Heart right ventricle (tissue), 16 donors: ENCODE measurements at regions of chr3 and their contacts with region 1.

Region 1: DNA sequence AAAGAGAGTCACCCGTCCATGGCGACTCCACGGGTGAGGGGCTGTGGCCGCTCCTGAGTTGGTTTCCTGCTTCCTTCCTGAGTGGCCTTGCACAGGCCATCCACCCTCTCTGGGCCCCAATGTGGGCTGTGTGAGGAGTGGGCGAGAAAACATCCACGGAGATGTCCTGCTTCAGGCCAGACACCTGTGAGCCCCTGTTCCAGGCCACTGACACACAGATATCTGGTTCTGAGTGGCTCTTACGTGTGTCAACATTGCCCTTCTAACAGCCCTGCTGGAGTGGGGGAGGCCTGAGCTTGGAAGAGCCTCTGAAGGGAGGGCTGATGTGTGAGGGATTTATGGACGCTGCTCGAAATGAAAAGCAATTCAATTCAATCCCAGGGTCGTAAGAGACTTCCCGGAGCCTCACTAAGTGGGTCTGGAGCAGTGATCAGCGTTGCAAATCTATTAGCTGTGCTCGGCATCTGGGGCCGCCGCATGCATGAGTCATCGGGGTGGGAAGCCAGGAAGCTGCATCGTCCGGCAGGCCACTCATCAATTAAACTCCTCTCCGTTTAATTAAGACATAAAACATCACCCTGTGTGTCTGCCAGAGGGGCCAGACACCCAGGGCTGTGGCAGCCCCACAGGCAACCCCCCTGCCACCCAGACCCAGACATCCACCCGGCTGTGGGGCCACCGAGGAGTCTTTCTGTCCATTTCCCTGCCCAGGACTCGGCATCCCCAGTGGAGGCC is 20.0 kb upstream of the PRR23E start:
- DNase-seq: no peak
- ATAC-seq: peak in 1 of 8 donors; percentile 28
- H3K4me3 ChIP-seq: no peak overlapping the region
- H3K27ac ChIP-seq: no peak overlapping the region
- H3K4me1 ChIP-seq: peaks cover 0 to 8% (median 5%) of the 10 kb centered on the region in 9 donors
- H3K27me3 ChIP-seq: peaks cover 0 to 23% (median 9%) of the 10 kb centered on the region in 7 donors
- CTCF ChIP-seq: no peak

Region 2: GRCh38 chr3:126758026-126758425 is 414.9 kb before region 1 on chr3:
- intact Hi-C with region 1: loop called in 8 of 10 experiments (anchors 2 to 10 kb)
- DNase-seq: no peak
- ATAC-seq: peak in 3 of 8 donors; percentile 51 to 72 (median 51)
- H3K4me3 ChIP-seq: no peak overlapping the region
- H3K27ac ChIP-seq: no peak overlapping the region
- H3K4me1 ChIP-seq: peaks cover 0 to 19% (median 2%) of the 10 kb centered on the region in 9 donors
- H3K27me3 ChIP-seq: no peaks in the 10 kb centered on the region
- CTCF ChIP-seq: no peak

Region 3: DNA sequence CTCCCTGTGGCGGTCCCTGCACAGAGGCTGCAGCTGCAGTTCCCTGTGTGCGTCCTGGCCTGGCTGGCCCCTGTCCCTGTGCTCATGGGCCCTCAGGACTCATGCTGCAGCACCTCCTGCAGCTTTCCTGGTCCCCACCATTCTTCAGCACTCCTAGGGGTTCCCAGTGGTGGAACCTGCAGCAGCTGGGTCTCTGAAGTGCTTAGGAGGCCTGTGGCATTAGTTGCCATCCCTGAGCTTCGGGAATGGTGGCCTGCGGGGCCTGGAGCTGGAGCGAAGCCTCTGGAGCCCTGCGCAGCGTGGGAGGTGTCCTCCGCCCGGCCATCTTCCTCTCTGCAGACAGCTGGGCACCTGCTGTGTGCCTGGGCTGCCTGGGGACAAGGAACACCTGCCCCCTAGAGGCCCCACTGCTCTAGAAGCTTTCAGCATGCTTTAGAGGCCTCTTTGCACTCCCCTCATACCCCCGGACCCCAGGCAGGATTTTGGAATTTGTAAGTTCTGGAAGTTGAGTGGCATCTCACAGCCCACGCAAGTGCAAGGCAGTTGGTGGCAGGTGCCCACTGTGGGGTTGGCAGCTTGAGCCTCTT is 176.9 kb before region 1 on chr3:
- intact Hi-C with region 1: loop called in 2 of 10 experiments (anchors 10 kb)
- DNase-seq: no peak
- ATAC-seq: no peak
- H3K4me3 ChIP-seq: no peak overlapping the region
- H3K27ac ChIP-seq: peak overlapping the region in 1 of 10 donors; percentile 77
- H3K4me1 ChIP-seq: peaks cover 30 to 99% (median 66%) of the 10 kb centered on the region in 9 donors
- H3K27me3 ChIP-seq: no peaks in the 10 kb centered on the region
- CTCF ChIP-seq: peak in 1 of 9 donors; percentile 17

Region 4: DNA sequence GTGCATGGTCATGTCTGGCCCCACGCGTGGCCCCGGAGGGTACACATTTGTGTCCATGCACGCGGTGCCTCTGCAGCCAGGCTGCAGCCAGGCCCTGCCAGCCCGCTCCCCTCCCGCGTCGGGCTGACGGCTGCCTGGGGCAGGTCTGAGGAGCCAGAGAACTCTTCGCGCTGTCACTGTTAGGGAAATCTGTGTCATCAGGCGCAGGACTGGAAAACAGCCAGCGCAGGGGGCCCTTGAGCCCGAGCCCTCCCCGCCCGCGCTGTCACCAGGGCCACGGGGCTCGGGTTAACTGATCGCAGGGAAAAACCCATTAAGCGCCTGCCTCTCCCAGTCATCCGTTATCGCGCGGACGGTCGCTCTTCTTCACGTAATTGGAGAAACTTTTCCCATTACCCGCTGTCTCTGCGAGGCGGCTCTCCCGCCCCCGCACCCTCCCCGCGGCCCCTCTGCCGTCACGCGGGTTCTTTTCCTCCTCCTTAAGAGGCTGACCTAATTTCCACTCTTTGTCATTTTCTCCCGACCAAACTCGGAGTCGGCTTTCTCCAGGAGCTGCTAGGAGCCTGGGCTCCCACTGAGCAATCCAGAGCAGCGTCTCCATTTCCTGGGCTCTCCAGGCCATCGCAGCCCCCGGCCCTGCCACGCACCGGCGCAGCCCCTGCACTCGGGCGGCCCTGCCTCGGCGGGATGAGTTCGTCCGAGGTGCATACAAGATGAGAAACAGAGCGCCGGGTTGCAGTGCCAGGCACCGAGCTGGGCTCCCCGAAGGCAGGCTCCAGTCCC is 37.5 kb before region 1 on chr3:
- intact Hi-C with region 1: loop called in 1 of 10 experiments (anchors 2 kb)
- DNase-seq: peak; percentile 52 to 55
- ATAC-seq: peak; percentile 2 to 46 (median 28)
- H3K4me3 ChIP-seq: peak overlapping the region in 9 of 10 donors; percentile 12 to 47 (median 42)
- H3K27ac ChIP-seq: peak overlapping the region in 9 of 10 donors; percentile 2 to 78 (median 63)
- H3K4me1 ChIP-seq: peaks cover 0 to 49% (median 23%) of the 10 kb centered on the region in 9 donors
- H3K27me3 ChIP-seq: peaks cover 0 to 41% (median 14%) of the 10 kb centered on the region in 7 donors
- CTCF ChIP-seq: no peak